Caco-2 (cell line): ENCODE measurements at regions of chr12 and their contacts with region 1.

Region 1: GRCh38 chr12:122726080-122726558 is 4.5 kb downstream of the HCAR1 start:
- DNase-seq: peak; percentile 72 to 74
- H3K4me3 ChIP-seq: no peak overlapping the region
- H3K4me3 Mint-ChIP-seq: peak overlapping the region; percentile 62
- H3K27ac Mint-ChIP-seq: peak overlapping the region; percentile 95
- H3K4me1 ChIP-seq: peaks cover 66% of the 10 kb centered on the region
- H3K4me1 Mint-ChIP-seq: peaks cover 10% of the 10 kb centered on the region
- H3K27me3 ChIP-seq: no peaks in the 10 kb centered on the region
- H3K27me3 Mint-ChIP-seq: no peaks in the 10 kb centered on the region
- CTCF ChIP-seq: no peak

Region 2: GRCh38 chr12:122681814-122682213 is 44.3 kb before region 1 on chr12:
- CTCF ChIA-PET with region 1: no interaction called
- POLR2A ChIA-PET with region 1: no interaction called
- intact Hi-C with region 1: loop called (anchors 2 kb)
- DNase-seq: no peak
- H3K4me3 ChIP-seq: no peak overlapping the region
- H3K4me3 Mint-ChIP-seq: no peak overlapping the region
- H3K27ac Mint-ChIP-seq: no peak overlapping the region
- H3K4me1 ChIP-seq: peaks cover 15% of the 10 kb centered on the region
- H3K4me1 Mint-ChIP-seq: peaks cover 7% of the 10 kb centered on the region
- H3K27me3 ChIP-seq: no peaks in the 10 kb centered on the region
- H3K27me3 Mint-ChIP-seq: no peaks in the 10 kb centered on the region
- CTCF ChIP-seq: no peak